ENCODE measurements at regions of chr11 and their contacts with region 1.

Region 1: GRCh38 chr11:62855571-62856332 is 16.4 kb upstream of the WDR74 start:
- DNase-seq: peak; percentile 98
- ATAC-seq: peak; percentile 89
- H3K4me3 Mint-ChIP-seq: peak overlapping the region; percentile 95
- H3K27ac Mint-ChIP-seq: peak overlapping the region; percentile 95
- H3K4me1 Mint-ChIP-seq: peaks cover 46% of the 10 kb centered on the region
- H3K27me3 Mint-ChIP-seq: no peaks in the 10 kb centered on the region
- CTCF ChIP-seq: no peak

Region 2: GRCh38 chr11:62269650-62270278 is 586.0 kb before region 1 on chr11 and contains the start of gene SCGB2A2:
- CTCF ChIA-PET with region 1: no interaction called
- POLR2A ChIA-PET with region 1: no interaction called
- intact Hi-C with region 1: no loop called
- DNase-seq: no peak
- ATAC-seq: no peak
- H3K4me3 Mint-ChIP-seq: no peak within 1 kb of the TSS
- H3K27ac Mint-ChIP-seq: no peak within 1 kb of the TSS
- H3K4me1 Mint-ChIP-seq: peaks cover 15% of the 10 kb centered on the region
- H3K27me3 Mint-ChIP-seq: peaks cover 7% of the 10 kb centered on the region
- CTCF ChIP-seq: peak; percentile 34
- total RNA-seq, gene SCGB2A2: not detected

Region 3: DNA sequence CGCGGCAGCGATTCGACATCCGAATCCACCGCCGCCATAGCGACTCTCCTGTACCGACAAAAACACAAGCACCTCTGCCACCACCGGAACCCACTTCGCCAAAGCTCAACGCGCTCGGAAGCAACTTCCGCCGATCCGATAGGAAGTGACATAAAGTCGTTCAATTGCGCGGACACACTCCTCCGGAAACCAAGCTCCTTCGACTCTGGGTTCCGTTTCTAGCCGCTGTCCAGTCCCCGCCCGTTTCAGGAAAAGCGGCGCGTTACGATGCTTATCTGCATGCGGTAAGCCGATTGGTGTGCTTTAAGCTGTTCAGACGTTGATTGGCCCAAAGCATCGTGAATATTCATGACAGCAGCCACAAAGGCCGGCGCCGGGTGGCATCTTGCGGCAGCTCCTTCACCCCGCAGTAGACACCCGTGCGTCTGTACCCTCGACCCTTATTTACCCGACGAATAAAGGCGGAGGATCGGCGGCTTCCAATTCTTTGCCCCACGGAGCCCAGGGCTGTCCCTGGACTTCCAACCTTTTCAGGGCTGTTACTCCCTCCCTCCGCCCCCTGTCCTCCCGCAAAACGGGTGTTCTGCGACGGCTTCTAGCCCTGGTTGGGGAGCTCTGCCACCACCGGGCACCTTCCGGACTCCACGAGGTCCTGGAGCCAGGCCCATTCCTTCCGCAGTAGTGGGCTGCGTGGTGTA is 264.2 kb before region 1 on chr11 and contains the start of gene TUT1:
- CTCF ChIA-PET with region 1: no interaction called
- POLR2A ChIA-PET with region 1: interaction called, 33 read pairs
- intact Hi-C with region 1: no loop called
- DNase-seq: peak; percentile 98
- ATAC-seq: peak; percentile 91
- H3K4me3 Mint-ChIP-seq: peak within 1 kb of the TSS; percentile 100
- H3K27ac Mint-ChIP-seq: peak within 1 kb of the TSS; percentile 98
- H3K4me1 Mint-ChIP-seq: peaks cover 49% of the 10 kb centered on the region
- H3K27me3 Mint-ChIP-seq: no peaks in the 10 kb centered on the region
- CTCF ChIP-seq: no peak
- total RNA-seq, gene TUT1: 34.4 to 38.0 TPM

Region 4: DNA sequence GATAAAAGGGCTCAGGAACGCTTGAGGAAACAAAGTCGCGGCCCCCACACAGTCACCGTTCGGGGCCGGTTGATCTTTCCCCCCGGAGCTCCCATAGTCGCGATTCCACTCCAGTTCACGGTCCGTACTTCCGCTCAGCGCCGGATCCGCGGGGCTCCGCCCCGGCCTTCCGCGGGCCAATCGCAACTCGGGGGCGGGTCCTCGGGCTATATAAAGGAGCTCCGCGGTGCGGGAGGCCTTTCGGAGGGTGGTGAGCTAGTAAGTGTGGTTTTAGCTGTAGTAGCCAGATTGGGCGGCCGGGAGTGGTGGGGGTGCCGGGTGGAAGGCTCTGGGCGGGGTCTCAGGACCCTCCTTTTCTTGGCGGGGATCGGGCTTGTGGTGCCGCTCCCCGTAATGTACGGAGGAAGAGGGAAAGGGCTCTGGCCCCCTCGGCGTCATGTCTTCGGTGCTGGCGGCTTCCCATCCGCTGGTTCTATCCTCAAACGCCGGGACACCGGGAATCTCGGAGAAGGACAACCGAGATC is 190.6 kb before region 1 on chr11 and contains the starts of genes C11orf98 and CSKMT:
- CTCF ChIA-PET with region 1: no interaction called
- POLR2A ChIA-PET with region 1: interaction called, 106 read pairs
- intact Hi-C with region 1: no loop called
- DNase-seq: peak; percentile 96
- ATAC-seq: peak; percentile 89
- H3K4me3 Mint-ChIP-seq: peak within 1 kb of the TSS; percentile 98
- H3K27ac Mint-ChIP-seq: peak within 1 kb of the TSS; percentile 92
- H3K4me1 Mint-ChIP-seq: peaks cover 33% of the 10 kb centered on the region
- H3K27me3 Mint-ChIP-seq: no peaks in the 10 kb centered on the region
- CTCF ChIP-seq: no peak
- total RNA-seq, gene C11orf98: 108 TPM
- total RNA-seq, gene CSKMT: 37.1 to 43.6 TPM

Region 5: GRCh38 chr11:62753736-62754603 is 101.8 kb before region 1 on chr11 and contains the start of gene ZBTB3:
- CTCF ChIA-PET with region 1: no interaction called
- POLR2A ChIA-PET with region 1: interaction called, 31 read pairs
- intact Hi-C with region 1: no loop called
- DNase-seq: peak; percentile 99
- ATAC-seq: peak; percentile 97
- H3K4me3 Mint-ChIP-seq: peak within 1 kb of the TSS; percentile 99
- H3K27ac Mint-ChIP-seq: peak within 1 kb of the TSS; percentile 99
- H3K4me1 Mint-ChIP-seq: peaks cover 26% of the 10 kb centered on the region
- H3K27me3 Mint-ChIP-seq: no peaks in the 10 kb centered on the region
- CTCF ChIP-seq: no peak
- total RNA-seq, gene ZBTB3: 9.8 to 11.8 TPM

Region 6: GRCh38 chr11:62787005-62787759 is 68.6 kb before region 1 on chr11 and contains the start of gene TMEM179B:
- CTCF ChIA-PET with region 1: interaction called, 47 read pairs
- POLR2A ChIA-PET with region 1: interaction called, 183 read pairs
- intact Hi-C with region 1: no loop called
- DNase-seq: peak; percentile 100
- ATAC-seq: peak; percentile 75
- H3K4me3 Mint-ChIP-seq: peak within 1 kb of the TSS; percentile 95
- H3K27ac Mint-ChIP-seq: peak within 1 kb of the TSS; percentile 95
- H3K4me1 Mint-ChIP-seq: peaks cover 41% of the 10 kb centered on the region
- H3K27me3 Mint-ChIP-seq: no peaks in the 10 kb centered on the region
- CTCF ChIP-seq: peak; percentile 69
- total RNA-seq, gene TMEM179B: 18.6 to 19.5 TPM

Region 7: DNA sequence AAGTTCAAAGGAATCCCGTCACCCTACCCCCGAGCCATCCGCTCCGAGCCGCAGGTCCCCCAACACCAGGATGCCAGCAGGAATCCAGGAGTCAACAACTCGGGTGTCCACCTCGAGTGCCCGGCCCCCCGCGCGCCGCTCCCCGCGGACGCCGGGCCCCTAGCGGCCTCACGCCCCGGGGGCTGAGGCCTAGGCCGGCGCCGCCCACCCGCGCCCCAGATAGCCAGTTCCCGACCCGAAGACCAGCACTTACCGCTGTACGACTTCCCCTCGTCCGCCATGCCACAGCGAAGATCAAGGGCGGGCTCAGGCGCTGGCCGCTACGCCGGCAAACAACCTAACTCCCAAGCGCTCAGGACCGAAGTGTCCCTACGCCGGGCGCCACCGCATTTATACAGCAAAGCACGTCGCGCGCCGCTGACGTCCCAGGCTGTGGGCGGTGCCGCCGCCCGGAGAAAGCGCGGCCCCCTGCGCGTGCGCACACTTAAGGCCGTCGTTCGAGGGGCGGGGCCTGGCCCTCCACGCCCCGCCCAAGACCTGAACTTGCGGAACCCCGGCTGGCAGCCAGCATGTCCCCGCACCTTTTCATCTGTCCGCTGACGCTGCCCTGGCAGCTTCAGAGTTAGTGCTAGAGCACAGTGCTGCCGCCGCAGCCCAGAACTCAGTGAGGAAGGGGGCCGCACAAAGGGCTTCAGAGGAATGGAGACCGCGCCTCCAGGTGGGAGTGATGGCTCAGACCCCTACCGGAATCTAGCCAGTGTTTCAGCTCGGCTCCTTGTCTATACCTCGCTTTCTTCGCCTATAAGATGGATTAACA is 50.5 kb before region 1 on chr11 and contains the start of gene NXF1:
- CTCF ChIA-PET with region 1: no interaction called
- POLR2A ChIA-PET with region 1: interaction called, 88 read pairs
- intact Hi-C with region 1: no loop called
- DNase-seq: peak; percentile 95
- ATAC-seq: peak; percentile 85
- H3K4me3 Mint-ChIP-seq: peak within 1 kb of the TSS; percentile 95
- H3K27ac Mint-ChIP-seq: peak within 1 kb of the TSS; percentile 98
- H3K4me1 Mint-ChIP-seq: peaks cover 38% of the 10 kb centered on the region
- H3K27me3 Mint-ChIP-seq: no peaks in the 10 kb centered on the region
- CTCF ChIP-seq: peak; percentile 31
- total RNA-seq, gene NXF1: 80.9 to 90.0 TPM

Region 8: GRCh38 chr11:62905927-62906531 is 50.3 kb after region 1 on chr11:
- CTCF ChIA-PET with region 1: no interaction called
- POLR2A ChIA-PET with region 1: no interaction called
- intact Hi-C with region 1: no loop called
- DNase-seq: peak; percentile 82
- ATAC-seq: peak; percentile 82
- H3K4me3 Mint-ChIP-seq: no peak overlapping the region
- H3K27ac Mint-ChIP-seq: no peak overlapping the region
- H3K4me1 Mint-ChIP-seq: peaks cover 23% of the 10 kb centered on the region
- H3K27me3 Mint-ChIP-seq: peaks cover 12% of the 10 kb centered on the region
- CTCF ChIP-seq: peak; percentile 94

Region 9: DNA sequence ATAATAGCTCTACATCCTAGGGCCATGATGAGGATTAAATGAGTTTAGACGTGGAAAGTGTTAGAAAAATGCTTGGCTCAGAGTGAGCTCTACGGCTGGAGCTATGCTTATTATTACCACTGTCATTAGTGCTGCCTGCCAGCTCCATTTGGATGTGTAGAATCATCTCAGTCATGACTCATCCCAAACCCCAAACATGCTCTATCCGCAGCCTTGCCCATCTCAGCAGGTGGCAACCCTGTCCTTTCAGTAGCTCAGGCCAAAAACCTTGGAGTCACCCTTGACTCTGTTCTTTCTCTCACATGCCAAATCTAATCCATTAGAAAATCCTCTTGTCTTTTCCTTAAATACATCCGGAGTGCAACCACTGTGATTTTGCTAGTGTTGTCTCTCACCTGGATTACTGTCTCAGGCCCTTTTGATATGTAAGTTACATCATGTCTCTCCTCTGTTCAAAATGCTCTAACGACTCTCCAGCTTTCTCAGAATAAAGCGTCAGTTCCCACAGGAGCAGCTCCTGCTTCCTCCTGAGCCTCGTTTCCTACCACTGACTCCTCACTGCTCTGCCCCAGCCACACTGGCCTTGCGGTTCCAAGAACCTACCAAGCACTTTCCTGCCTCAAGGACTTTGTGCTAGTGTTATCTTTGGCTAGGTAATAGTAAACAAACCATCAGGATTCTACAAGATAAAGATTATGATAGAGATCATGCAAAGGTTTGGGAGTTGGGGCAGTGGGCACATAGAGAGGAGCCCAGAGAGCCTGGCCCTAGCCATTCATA is 75.9 kb after region 1 on chr11:
- CTCF ChIA-PET with region 1: no interaction called
- POLR2A ChIA-PET with region 1: no interaction called
- intact Hi-C with region 1: no loop called
- DNase-seq: no peak
- ATAC-seq: no peak
- H3K4me3 Mint-ChIP-seq: no peak overlapping the region
- H3K27ac Mint-ChIP-seq: no peak overlapping the region
- H3K4me1 Mint-ChIP-seq: no peaks in the 10 kb centered on the region
- H3K27me3 Mint-ChIP-seq: peaks cover 34% of the 10 kb centered on the region
- CTCF ChIP-seq: no peak

Region 10: GRCh38 chr11:62958547-62959421 is 103.0 kb after region 1 on chr11:
- CTCF ChIA-PET with region 1: no interaction called
- POLR2A ChIA-PET with region 1: no interaction called
- intact Hi-C with region 1: no loop called
- DNase-seq: no peak
- ATAC-seq: no peak
- H3K4me3 Mint-ChIP-seq: no peak overlapping the region
- H3K27ac Mint-ChIP-seq: no peak overlapping the region
- H3K4me1 Mint-ChIP-seq: no peaks in the 10 kb centered on the region
- H3K27me3 Mint-ChIP-seq: peaks cover 6% of the 10 kb centered on the region
- CTCF ChIP-seq: no peak

Measured in activated CD8-positive, alpha-beta T cell treated with anti-CD3 and anti-CD28 coated beads for 36 hours (primary cell).